ENCODE measurements at regions of chr10 and their contacts with region 1.

Region 1: DNA sequence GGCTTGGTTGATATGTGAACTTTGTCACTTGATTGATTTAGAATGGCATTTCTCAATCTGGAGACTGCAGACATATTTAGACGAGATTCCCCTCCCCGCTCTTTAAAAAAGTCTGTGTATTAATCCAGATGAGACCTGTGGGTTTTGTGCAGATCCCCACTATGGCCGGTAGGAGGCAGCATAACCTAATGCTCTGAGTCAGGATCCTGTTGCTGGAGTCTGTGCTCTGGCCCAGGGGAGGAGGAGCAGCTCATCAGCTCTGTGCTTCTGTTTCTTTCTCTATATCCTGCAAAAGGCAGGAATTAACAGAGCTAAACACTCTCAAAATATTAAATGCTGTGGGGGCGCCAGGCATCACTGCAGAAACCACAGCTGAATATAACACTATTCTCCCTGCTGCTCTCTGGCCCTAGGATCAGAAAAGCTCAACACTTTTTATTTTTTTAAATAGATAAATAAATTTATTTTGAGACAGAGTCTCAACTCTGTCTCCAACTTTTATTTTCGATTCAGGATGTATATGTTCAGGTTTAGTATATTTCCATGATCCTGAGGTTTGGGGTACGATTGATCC is 23.9 kb upstream of the SEPHS1 start:
- DNase-seq: no peak

Region 2: DNA sequence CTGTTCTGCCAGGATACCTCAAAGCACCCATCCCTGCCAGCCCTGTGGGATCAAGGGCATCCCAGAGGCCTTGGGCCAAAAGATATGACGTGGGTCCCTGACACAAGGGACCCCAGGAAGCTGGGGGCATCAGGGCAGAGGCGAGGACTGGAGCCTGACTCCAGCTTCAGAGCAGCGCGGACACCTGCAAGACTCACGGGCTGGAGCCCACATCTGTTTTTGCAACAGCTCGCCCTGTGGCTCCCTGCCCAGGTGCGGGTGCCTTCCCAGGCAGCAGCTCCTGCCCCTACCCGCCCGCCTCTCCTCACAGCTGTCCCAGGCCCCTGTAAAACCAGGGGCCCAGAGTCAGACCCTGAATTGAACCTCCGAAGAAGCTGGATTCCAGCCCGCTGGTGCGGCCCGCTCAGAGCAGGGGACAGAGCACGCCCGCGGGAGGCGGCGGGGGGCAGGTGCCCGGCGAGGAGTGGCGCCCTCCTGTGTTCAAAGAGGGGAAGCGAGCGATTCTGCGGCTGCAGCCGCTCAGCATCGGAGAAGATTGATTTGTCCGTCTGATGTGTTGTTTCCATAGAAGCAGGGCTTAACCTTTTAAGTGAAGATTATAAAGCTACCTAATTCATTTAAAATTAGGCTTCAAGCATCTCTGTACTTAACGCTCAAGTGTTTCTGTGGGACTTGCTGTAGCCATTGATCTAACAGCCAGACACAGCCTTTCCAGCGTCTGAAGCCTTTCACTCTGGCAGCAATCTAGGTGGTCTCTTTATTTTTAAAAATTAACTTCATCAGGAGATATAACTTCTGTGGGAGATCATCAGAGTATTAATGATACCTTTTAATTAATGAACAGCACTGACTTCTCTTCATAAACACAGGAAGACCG is 68.4 kb after region 1 on chr10:
- intact Hi-C with region 1: loop called (anchors 2 kb)
- DNase-seq: no peak

Region 3: DNA sequence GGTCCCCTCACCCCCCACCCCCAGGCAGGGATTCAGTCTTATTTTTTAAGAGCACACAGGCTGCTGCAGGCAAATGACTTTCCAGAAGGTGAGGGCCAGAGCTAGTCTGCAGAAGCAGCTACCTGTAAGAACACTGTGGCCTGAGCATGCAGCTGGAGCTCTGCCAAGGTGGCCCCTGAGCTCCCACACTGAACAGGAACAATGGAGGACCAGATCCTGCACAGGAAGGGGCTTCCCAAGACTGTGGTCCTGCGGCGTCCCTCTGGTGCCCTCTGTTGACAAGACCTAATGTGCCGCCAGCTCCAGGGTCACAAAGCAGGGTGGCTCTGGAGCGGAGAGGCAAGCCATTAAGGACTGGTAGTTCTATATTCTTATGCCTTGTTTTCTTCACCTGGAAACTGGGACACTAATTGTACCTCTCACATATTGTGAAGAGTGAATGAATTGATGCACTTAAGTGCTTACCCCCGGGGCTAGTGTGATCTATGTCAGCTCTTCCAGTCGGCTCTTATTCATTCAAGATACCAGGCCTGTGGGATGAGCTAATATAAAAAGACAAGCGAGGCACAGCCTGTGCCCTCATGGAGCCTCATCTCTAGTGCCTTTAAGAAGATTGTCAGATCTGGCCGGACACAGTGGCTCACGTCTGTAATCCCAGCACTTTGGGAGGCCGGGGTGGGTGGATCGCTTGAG is 164.8 kb after region 1 on chr10:
- intact Hi-C with region 1: loop called (anchors 5 kb)
- DNase-seq: no peak

Region 4: GRCh38 chr10:13659897-13660550 is 288.0 kb after region 1 on chr10:
- intact Hi-C with region 1: no loop called
- DNase-seq: peak; percentile 87

Region 5: DNA sequence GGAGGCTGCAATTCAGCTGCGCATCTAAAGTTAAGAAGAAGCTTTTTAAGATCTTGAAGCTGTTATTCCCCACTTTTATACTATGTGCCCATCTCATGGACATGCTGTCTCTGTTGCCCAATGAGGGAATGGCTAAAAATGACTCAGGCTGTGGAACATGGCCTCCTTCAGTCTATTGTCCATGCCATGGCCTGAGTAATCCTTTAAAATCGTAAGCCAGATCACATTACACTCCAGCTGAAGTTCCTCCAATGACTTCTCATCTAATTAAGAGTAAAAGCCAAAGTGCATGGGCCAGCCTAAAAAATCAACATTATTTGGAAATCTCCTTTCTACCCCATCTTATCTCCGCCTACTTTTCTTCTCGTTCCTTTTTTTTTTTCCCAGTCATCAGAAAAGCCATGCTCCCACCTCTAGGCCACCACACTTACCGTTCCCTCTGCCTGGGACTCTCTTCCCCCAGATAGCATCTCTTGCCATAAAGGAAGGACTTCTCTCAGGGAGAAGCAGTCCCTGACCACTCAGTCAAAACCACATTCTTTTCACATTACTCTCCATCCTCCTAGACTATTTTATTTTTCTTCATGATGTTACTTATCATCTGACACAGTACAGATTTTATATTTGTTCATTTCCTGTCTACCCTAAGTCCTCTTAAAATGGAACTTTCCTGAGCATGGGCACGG is 552.2 kb after region 1 on chr10:
- intact Hi-C with region 1: no loop called
- DNase-seq: no peak